WTC11 (cell line): ENCODE measurements at regions of chr3 and their contacts with region 1.

Region 1: DNA sequence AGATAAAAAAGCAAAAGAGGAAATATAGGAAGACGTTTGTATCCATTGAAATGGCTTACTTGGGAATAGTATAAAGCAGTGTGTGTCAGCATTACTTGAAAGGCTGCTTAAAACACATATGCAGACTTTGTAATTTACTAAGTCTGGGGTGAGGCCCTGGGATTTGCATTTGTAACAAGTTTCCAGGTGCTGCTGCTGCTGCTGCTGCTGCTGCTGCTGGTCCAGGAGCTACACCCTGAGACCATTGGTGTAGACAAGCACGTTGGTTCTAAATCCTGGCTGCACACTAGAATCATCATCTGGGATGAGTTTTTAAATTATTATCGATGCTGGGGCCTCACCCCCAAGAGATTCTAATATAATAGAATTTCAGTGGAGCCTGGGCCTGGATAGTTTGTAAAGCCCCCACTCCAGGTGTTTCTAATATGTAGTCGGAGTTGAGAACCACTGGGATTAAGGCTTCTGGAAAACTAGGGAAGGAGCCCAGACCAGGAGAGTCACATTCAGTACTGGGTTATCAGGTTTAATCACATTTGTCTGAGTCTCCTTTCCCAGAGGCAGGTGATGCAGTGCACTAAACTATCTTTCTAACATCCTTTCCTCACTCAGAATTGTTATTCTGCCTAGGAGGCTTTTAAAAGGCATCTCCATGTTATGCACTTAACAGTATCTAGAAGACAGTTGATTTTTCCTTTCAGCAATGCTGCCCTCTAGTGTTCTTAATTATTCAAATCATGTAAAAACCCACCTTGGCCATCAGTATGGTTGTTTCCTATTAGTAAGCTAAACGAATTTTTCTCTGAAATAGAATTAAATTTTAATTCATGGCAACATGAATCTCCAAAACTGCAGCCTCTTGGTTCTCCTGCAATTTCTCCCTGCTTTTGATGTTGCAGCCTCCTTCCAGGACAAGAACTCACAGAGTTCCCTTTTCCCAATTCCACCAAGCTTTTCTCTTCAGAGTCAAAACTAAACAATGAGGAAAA is 45.4 kb downstream of the SSR3 start:
- DNase-seq: no peak
- ATAC-seq: peak; percentile 82
- H3K4me3 Mint-ChIP-seq: no peak overlapping the region
- H3K27ac Mint-ChIP-seq: no peak overlapping the region
- H3K4me1 Mint-ChIP-seq: peaks cover 21% of the 10 kb centered on the region
- H3K27me3 Mint-ChIP-seq: no peaks in the 10 kb centered on the region
- CTCF ChIP-seq: peak; percentile 17; the same call in 1 of the 2 replicates

Region 2: DNA sequence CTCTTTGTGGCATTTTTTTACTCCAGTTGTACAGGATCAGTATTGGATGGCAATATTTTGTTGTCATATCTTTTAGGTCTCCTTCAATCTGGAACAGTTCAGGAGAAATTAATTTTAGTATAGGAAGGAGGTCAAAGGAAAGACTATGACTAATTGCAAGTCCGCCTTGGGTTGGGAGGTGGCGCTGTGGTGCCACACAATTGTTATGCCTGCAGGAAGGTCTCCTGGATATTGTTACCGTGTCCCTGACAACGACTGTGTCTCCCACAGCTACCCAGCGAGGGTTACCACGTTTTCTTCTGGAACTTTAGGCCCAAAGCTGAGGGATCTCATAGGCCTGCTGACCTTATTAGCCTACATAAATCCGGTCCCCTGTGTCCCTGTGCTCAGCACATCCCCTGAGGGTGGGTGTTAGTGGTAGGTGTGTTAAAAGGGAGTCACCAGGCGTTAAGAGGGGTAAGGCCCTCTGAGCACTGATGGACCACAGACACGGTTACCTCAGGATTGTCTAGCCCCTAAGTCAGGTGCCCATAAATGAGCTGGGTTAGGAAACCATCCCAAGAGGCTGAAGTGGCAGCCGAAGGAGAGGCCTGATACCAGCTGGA is 357.6 kb before region 1 on chr3:
- CTCF ChIA-PET with region 1: interaction called, 27 read pairs
- POLR2A ChIA-PET with region 1: no interaction called
- DNase-seq: peak; percentile 77
- ATAC-seq: peak; percentile 94
- H3K4me3 Mint-ChIP-seq: no peak overlapping the region
- H3K27ac Mint-ChIP-seq: no peak overlapping the region
- H3K4me1 Mint-ChIP-seq: peaks cover 12% of the 10 kb centered on the region
- H3K27me3 Mint-ChIP-seq: no peaks in the 10 kb centered on the region
- CTCF ChIP-seq: peak; percentile 84

Region 3: GRCh38 chr3:156443079-156443478 is 66.4 kb before region 1 on chr3:
- CTCF ChIA-PET with region 1: interaction called, 10 read pairs
- POLR2A ChIA-PET with region 1: no interaction called
- DNase-seq: no peak
- ATAC-seq: no peak
- H3K4me3 Mint-ChIP-seq: no peak overlapping the region
- H3K27ac Mint-ChIP-seq: no peak overlapping the region
- H3K4me1 Mint-ChIP-seq: peaks cover 3% of the 10 kb centered on the region; the same call in 1 of the 2 replicates
- H3K27me3 Mint-ChIP-seq: no peaks in the 10 kb centered on the region; the same call in 1 of the 2 replicates
- CTCF ChIP-seq: no peak

Region 4: DNA sequence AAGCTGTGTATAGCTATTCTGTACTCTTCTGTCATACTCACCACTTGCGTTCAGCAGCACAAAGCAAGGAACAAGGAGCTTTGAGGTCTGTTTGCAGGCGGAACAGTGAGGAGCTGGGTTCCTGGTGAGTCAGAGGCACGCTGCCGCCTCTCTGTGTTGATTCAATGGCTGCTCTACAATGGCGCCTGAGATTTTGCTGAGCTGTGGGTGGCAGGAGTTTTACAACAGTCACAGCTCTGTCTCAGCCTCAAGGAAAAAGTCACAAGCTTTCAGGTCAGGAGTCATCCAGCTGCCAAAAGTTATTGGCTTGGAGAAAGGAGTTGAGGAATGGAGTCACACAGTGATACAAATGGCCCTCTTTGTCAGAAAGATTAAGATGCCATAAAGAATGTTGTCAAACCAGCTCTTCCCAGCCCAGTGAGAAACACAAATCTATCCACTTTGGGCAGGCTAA is 52.7 kb before region 1 on chr3:
- CTCF ChIA-PET with region 1: interaction called, 18 read pairs
- POLR2A ChIA-PET with region 1: interaction called, 3 read pairs
- DNase-seq: peak; percentile 27
- ATAC-seq: peak; percentile 80
- H3K4me3 Mint-ChIP-seq: peak overlapping the region; percentile 20; the same call in 1 of the 2 replicates
- H3K27ac Mint-ChIP-seq: peak overlapping the region; percentile 98
- H3K4me1 Mint-ChIP-seq: peaks cover 38% of the 10 kb centered on the region
- H3K27me3 Mint-ChIP-seq: no peaks in the 10 kb centered on the region
- CTCF ChIP-seq: no peak

Region 5: GRCh38 chr3:156648086-156648485 is 138.6 kb after region 1 on chr3:
- CTCF ChIA-PET with region 1: no interaction called
- POLR2A ChIA-PET with region 1: no interaction called
- DNase-seq: no peak
- ATAC-seq: no peak
- H3K4me3 Mint-ChIP-seq: no peak overlapping the region
- H3K27ac Mint-ChIP-seq: no peak overlapping the region
- H3K4me1 Mint-ChIP-seq: peaks cover 11% of the 10 kb centered on the region
- H3K27me3 Mint-ChIP-seq: no peaks in the 10 kb centered on the region
- CTCF ChIP-seq: no peak